GM10248 (cell line): ENCODE measurements at regions of chr9 and their contacts with region 1.

Region 1: GRCh38 chr9:130866474-130866965 is 30.1 kb downstream of the QRFP start:
- DNase-seq: peak; percentile 43
- CTCF ChIP-seq: peak; percentile 63

Region 2: GRCh38 chr9:130433168-130433946 is 433.2 kb before region 1 on chr9:
- CTCF ChIA-PET with region 1: no interaction called
- POLR2A ChIA-PET with region 1: no interaction called
- DNase-seq: no peak
- CTCF ChIP-seq: no peak

Region 3: DNA sequence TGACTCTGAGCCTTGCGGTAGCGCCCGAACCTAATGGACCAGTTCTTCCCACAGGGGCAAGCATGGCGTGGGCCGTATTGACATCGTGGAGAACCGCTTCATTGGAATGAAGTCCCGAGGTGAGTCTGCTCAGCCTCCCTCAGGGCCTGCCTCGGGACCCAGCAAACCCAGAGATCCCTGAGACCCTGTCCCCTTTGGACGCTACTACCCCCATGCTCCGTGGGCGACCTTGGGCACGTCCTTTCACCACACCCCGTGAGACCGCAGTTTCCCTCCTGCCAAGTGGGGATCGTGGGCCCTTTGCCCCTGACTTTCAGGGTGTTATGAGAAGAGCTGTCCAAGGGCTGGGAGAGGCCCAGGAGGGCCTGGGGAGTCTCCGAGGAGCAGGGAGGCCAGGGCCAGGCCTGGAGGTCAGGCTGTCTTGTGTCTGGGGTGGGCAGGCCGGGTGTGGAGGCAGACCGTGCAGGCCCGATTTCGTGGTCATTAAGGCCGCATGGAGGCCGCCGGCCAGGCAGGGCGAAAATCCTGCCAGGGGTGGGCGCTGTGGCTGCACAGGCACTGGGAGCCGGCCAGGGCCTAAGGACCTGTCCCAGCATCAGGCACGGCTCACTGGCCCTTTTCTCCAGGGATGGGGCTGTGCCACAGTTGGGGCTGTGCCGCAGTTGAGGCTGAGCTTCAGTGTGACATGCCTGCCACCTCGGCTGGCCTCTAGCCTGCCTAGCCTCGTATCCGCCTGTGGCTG is 386.0 kb before region 1 on chr9:
- CTCF ChIA-PET with region 1: no interaction called
- POLR2A ChIA-PET with region 1: no interaction called
- DNase-seq: no peak
- CTCF ChIP-seq: no peak

Region 4: GRCh38 chr9:130756037-130756436 is 110.5 kb before region 1 on chr9:
- CTCF ChIA-PET with region 1: interaction called, 10 read pairs
- POLR2A ChIA-PET with region 1: no interaction called
- DNase-seq: no peak
- CTCF ChIP-seq: no peak

Region 5: DNA sequence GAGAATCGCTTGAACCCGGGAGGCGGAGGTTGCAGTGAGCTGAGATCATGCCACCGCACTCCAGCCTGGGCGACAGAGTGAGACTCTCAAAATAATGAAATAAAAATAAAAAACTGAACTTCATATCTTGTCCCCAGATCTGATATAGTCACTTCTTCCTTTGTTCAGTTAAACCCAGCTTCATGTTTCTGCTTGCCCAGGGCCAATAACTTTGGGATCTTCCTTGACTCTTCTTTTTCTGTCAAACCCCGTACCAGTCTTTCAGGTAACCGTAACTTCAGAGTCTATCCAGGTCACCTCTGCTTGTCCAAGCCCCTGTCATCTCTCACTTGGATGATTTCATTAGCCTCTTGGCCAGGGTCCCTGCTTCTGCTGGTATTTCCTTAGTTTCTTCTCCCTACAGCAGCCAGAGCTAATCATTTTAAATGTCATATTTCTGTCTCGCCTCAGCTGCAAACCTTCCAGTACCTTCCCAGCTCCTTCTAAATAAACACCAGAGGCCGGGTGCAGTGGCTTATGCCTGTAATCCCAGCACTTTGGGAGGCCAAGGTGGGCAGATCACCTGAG is 51.2 kb before region 1 on chr9:
- CTCF ChIA-PET with region 1: interaction called, 12 read pairs
- POLR2A ChIA-PET with region 1: no interaction called
- DNase-seq: no peak
- CTCF ChIP-seq: no peak

Region 6: DNA sequence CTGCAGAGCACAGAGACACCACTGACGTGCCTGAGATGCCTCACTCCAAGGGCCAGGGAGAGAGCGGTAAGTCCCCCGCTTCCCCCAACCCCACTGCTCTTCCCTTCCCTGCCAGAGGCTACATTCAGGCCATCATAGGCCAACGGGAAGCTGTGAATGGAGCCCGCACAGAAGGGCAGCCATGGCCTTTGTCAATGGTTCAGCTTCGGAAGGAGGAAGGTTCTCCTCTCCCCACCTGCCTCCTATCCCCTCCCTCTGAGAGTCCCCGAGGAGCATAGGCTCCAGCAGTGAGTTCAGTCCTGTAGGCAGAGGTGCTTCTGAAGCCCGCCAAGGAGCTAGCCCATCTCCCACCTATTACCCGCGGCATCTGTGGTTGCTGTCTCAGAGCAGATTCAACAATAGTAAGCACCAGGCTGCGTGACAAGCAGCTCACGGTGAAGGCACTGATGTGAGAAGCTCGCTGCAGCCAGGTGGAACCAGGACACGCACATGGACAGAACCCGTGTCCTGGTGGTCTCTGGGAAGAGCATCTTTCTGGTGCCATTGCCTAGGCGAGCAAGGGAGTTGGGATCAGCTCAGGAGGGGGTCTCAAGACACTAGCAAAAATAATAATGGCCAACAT is 14.2 kb after region 1 on chr9:
- CTCF ChIA-PET with region 1: interaction called, 29 read pairs
- POLR2A ChIA-PET with region 1: no interaction called
- DNase-seq: no peak
- CTCF ChIP-seq: no peak

Region 7: GRCh38 chr9:130927995-130928900 is 61.7 kb after region 1 on chr9:
- CTCF ChIA-PET with region 1: interaction called, 12 read pairs
- POLR2A ChIA-PET with region 1: no interaction called
- DNase-seq: peak; percentile 79
- CTCF ChIP-seq: no peak

Region 8: DNA sequence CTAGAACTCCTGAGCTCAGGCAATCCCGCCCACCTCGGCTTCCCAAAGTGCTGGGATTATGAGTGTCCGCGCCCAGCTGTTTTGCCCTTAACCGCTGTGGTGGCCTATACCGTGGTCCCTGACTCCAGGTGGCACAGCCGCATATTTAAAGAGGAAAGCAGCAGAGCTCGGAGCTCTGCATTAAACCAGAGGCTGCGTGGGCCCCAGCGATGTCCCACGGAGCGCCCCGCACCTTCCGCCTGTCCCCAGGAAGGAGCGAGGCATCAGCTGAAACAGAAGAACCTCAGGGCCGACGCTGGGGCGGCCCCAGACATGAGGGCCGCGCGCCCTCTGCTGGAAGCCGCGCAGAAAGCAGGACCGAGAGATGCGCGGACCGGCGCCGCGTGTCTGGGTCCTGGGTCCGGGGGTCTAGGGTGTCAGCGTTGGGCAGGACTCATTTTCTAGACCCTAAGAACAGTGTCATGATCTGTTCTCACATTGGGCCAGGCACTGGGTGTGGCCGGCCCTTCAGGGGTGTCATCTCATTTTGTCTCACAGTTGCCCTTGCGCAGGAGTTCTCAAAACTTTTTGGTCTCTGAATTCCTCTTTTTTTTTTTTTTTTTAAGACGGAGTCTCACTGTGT is 180.2 kb after region 1 on chr9:
- CTCF ChIA-PET with region 1: interaction called, 73 read pairs
- POLR2A ChIA-PET with region 1: no interaction called
- DNase-seq: peak; percentile 88
- CTCF ChIP-seq: peak; percentile 96

Region 9: GRCh38 chr9:131447148-131447547 is 580.6 kb after region 1 on chr9:
- CTCF ChIA-PET with region 1: no interaction called
- POLR2A ChIA-PET with region 1: no interaction called
- DNase-seq: no peak
- CTCF ChIP-seq: no peak